HEK293T (cell line): ENCODE measurements at regions of chr1 and their contacts with region 1.

Region 1: GRCh38 chr1:93078986-93079654 is at the start of gene MTF2:
- DNase-seq: peak; percentile 94

Region 2: GRCh38 chr1:92960395-92961130 is 118.6 kb before region 1 on chr1:
- CTCF ChIA-PET with region 1: no interaction called
- POLR2A ChIA-PET with region 1: interaction called, 12 read pairs
- DNase-seq: peak; percentile 79

Region 3: DNA sequence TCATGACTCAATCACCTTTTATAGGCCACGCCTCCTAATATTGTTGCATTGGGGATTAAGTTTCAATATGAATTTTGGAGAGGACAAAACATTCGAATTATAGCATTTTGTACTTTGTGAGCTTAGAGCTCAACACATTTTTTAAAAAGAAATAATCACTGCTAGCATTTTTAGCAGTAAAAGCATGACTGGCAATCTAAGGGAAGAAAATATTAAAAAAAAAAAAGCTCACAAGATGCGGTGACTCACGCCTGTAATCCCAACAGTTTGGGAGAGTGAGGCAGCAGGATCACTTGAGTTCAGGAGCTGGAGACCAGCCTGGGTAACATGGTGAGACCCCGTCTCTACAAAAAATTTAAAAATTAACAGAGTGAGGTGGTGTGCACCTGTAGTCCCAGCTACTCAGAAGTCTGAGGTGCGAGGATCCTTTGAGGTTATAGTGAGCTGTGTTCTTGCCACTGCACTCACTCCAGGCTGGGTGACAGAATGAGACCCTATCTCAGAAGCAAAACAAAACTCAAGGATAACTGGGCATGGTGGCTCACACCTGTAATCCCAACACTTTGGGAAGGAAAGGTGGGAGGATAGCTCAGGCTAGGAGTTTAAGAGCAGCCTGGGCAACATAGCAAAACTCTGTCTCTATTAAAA is 89.1 kb before region 1 on chr1:
- CTCF ChIA-PET with region 1: no interaction called
- POLR2A ChIA-PET with region 1: no interaction called
- DNase-seq: no peak

Region 4: DNA sequence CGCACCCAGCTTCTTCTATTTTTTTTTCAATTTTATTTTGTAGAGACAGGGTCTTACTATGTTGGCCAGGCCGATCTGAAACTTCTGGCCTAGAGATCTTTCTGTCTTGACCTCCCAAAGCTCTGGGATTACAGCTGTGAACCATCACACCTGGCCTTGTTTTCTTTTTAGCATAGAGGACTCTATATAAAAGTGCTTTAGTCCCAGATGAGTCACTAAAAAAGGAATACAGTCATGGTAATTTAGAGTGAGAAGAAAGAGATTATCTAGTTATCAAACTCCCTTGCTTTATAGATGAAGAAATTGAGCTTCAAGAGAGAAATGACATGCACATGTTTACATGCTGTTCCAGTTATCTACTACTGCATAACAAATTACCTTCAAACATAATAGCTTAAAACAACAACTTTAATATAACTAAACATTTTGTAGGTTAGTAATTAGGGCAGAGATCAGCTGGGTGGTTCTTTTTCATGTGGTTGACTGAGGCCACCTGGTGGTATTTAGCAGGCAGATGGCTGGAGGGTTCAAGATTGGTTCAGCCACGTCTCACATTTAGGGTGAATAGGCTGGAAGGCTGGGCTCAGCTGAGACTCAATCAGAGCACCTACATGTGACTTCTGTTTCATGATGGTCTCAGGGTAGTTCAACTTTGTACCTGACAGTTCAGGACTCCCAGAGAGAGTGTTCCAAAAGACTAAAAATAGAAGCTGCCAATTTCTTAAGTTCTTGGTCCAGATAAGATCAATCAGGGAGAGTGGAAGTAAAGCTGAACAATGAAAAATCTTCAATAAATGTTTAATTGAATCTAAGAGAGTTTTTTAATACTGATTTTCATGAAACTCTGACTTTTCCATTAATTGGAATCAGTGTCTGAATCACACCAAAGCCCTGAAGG is 17.0 kb before region 1 on chr1:
- CTCF ChIA-PET with region 1: interaction called, 3 read pairs
- POLR2A ChIA-PET with region 1: interaction called, 35 read pairs
- DNase-seq: peak; percentile 56

Region 5: DNA sequence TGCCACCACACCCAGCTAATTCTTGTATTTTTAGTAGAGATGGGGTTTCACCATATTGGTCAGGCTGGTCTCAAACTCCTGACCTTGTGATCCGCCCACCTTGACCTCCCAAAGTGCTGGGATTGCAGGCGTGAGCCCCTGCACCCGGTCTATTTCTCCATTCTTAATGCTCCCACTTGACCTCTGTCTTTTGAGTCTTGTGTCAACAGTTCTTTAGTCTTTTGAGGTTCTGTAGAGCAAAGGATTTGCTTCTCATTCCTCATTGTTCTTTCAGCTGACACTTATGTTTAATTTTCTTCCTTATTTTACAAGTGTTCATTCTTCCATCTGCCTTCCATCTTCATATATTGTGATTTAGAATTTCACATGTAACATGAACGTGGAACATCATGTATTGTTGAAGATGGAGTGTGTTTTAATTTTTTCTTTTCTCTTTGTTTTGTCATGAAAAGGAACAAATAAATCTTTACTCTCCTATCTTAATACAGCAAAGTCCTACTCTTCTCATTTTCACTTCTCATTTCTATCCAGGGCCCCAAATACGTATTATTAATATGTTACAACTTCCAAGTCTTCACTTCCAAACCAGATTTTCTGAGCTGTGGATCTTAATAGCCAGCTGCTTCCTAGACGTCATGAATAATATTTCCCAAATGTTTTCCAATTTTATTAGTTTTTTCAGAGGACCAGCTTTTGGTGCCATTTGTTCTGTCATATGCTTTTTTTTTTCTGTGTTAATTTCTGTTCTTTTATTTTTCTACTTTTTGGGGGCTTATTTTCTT is 16.9 kb after region 1 on chr1:
- CTCF ChIA-PET with region 1: interaction called, 5 read pairs
- POLR2A ChIA-PET with region 1: interaction called, 12 read pairs
- DNase-seq: no peak